ENCODE measurements at regions of chr19 and their contacts with region 1.

Region 1: GRCh38 chr19:43519436-43520088 is 7.4 kb downstream of the ETHE1 start:
- DNase-seq: peak; percentile 83 to 90
- ATAC-seq: peak; percentile 89
- H3K4me3 ChIP-seq: no peak overlapping the region
- H3K27ac ChIP-seq: no peak overlapping the region
- H3K4me1 ChIP-seq: no peaks in the 10 kb centered on the region
- H3K27me3 ChIP-seq: no peaks in the 10 kb centered on the region

Region 2: GRCh38 chr19:43446746-43447489 is 72.6 kb before region 1 on chr19:
- intact Hi-C with region 1: loop called (anchors 1 to 2 kb)
- DNase-seq: peak; percentile 84 to 90
- ATAC-seq: peak; percentile 91
- H3K4me3 ChIP-seq: no peak overlapping the region
- H3K27ac ChIP-seq: no peak overlapping the region
- H3K4me1 ChIP-seq: no peaks in the 10 kb centered on the region
- H3K27me3 ChIP-seq: no peaks in the 10 kb centered on the region

Region 3: DNA sequence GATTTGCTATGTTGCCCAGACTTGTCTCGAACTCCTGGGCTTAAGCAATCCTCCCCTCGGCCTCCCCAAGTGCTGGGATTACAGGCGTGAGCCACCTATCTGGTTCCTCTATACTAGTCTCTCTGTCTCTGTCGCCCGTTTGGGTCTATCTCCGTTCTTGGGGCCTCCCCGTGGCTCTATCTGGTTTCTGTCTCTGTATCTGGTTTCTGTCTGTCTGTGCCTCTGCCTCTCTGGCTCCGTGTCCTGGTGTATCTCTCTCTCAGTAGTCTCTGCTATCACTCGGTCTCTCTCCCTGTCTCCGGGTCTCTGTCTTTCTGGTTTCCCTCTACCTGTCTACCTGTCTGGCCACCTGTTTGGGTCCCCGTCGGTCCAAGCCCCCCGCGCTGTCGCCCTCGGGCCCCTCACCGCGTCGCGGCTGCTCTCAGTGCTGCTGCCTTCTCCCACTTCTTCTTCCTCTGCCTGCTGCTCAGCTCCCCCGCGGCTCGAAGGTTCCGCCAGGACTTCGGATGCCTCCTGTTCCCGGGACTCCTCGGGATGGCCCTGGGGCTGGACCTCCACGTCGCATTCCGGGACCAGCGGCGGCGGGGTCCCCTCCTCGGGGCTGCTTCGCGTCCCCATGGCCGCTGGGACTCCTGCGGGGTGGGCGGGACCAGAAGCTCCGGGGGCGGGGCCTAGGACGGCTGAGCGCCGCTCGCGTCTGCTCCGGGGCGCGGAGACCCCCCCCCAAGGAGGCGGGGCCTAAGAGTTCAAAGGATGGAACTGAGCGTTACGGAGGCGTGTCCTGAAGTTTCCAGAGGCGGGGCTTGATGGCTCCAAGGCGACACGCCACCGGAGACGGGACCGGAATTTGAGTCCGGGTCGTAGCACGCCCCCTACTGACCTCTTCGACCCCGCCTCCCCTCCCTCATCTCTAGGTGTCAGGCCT is 15.8 kb before region 1 on chr19:
- intact Hi-C with region 1: no loop called
- DNase-seq: peak; percentile 98 to 100
- ATAC-seq: peak; percentile 99
- H3K4me3 ChIP-seq: peak overlapping the region; percentile 53 to 84
- H3K27ac ChIP-seq: peak overlapping the region in 1 of 2 donors; percentile 69
- H3K4me1 ChIP-seq: no peaks in the 10 kb centered on the region
- H3K27me3 ChIP-seq: no peaks in the 10 kb centered on the region

Measured in aorta (tissue), 5 donors.